Activated T-helper 2 cell treated with anti-CD3 and anti-CD28 coated beads, Interferon-gamma antibody, Interleukin-2, Interleukin-4, amounts not matched to agents 10 μg/mL and 5 μg/mL and 100 μg/mL, durations not matched to agents 14 hours and 24 hours and 36 hours (primary cell): ENCODE measurements at regions of chr1 and their contacts with region 1.

Region 1: GRCh38 chr1:214328770-214329469 is 48.0 kb downstream of the SMYD2 start:
- DNase-seq: peak; percentile 70
- H3K4me3 Mint-ChIP-seq: no peak overlapping the region
- H3K27ac Mint-ChIP-seq: no peak overlapping the region
- H3K4me1 Mint-ChIP-seq: peaks cover 14% of the 10 kb centered on the region
- H3K27me3 Mint-ChIP-seq: no peaks in the 10 kb centered on the region

Region 2: GRCh38 chr1:213987927-213988506 is 340.9 kb before region 1 on chr1 and contains the start of gene PROX1:
- intact Hi-C with region 1: loop called (anchors 5 kb)
- DNase-seq: peak; percentile 48
- H3K4me3 Mint-ChIP-seq: peak within 1 kb of the TSS; percentile 89
- H3K27ac Mint-ChIP-seq: peak within 1 kb of the TSS; percentile 44
- H3K4me1 Mint-ChIP-seq: peaks cover 25% of the 10 kb centered on the region
- H3K27me3 Mint-ChIP-seq: peaks cover 94% of the 10 kb centered on the region
- total RNA-seq, gene PROX1: not detected in 2 replicates

Region 3: GRCh38 chr1:214002472-214002871 is 326.4 kb before region 1 on chr1:
- intact Hi-C with region 1: no loop called
- DNase-seq: no peak
- H3K4me3 Mint-ChIP-seq: no peak overlapping the region
- H3K27ac Mint-ChIP-seq: no peak overlapping the region
- H3K4me1 Mint-ChIP-seq: no peaks in the 10 kb centered on the region
- H3K27me3 Mint-ChIP-seq: peaks cover 14% of the 10 kb centered on the region

Region 4: GRCh38 chr1:214213136-214213535 is 115.8 kb before region 1 on chr1:
- intact Hi-C with region 1: loop called (anchors 1 kb)
- DNase-seq: no peak
- H3K4me3 Mint-ChIP-seq: no peak overlapping the region
- H3K27ac Mint-ChIP-seq: no peak overlapping the region
- H3K4me1 Mint-ChIP-seq: peaks cover 3% of the 10 kb centered on the region
- H3K27me3 Mint-ChIP-seq: peaks cover 31% of the 10 kb centered on the region

Region 5: GRCh38 chr1:214261206-214262123 is 67.5 kb before region 1 on chr1:
- intact Hi-C with region 1: loop called (anchors 1 kb)
- DNase-seq: peak; percentile 71
- H3K4me3 Mint-ChIP-seq: no peak overlapping the region
- H3K27ac Mint-ChIP-seq: no peak overlapping the region
- H3K4me1 Mint-ChIP-seq: peaks cover 28% of the 10 kb centered on the region
- H3K27me3 Mint-ChIP-seq: peaks cover 68% of the 10 kb centered on the region

Region 6: DNA sequence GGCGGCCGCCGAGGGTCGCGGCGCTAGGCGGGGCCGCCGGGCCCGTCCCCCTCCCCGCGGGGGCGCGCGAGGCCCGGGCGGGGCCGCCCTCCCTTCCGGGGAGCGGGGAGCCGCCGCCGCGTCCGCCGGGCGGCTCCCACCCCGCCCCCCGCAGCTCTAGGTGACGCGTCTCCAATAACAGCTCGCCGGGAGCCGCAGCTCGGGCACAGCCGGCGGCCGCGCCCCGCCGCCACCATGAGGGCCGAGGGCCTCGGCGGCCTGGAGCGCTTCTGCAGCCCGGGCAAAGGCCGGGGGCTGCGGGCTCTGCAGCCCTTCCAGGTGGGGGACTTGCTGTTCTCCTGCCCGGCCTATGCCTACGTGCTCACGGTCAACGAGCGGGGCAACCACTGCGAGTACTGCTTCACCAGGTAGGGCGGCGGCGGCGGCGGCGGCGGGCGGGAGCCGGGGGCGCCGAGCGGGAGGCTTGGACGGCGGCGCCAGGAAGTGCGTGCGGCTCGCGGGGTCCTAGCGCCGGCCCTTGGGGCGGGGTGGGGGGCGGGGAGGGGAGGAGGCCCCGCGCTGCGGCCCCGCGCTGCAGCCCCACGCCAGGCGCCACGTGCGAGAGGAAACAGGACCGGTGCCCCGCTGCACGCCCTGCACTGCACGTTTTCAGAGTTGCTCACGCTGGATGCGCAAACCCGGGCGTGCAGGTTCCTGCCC is 47.8 kb before region 1 on chr1 and contains the start of gene SMYD2:
- intact Hi-C with region 1: loop called (anchors 5 kb)
- DNase-seq: peak; percentile 64
- H3K4me3 Mint-ChIP-seq: peak within 1 kb of the TSS; percentile 94
- H3K27ac Mint-ChIP-seq: peak within 1 kb of the TSS; percentile 75
- H3K4me1 Mint-ChIP-seq: peaks cover 32% of the 10 kb centered on the region
- H3K27me3 Mint-ChIP-seq: no peaks in the 10 kb centered on the region
- total RNA-seq, gene SMYD2: 33.6 and 34.5 TPM in 2 replicates

Region 7: GRCh38 chr1:214416417-214416816 is 87.5 kb after region 1 on chr1:
- intact Hi-C with region 1: no loop called
- DNase-seq: no peak
- H3K4me3 Mint-ChIP-seq: no peak overlapping the region
- H3K27ac Mint-ChIP-seq: no peak overlapping the region
- H3K4me1 Mint-ChIP-seq: peaks cover 77% of the 10 kb centered on the region
- H3K27me3 Mint-ChIP-seq: no peaks in the 10 kb centered on the region

Region 8: DNA sequence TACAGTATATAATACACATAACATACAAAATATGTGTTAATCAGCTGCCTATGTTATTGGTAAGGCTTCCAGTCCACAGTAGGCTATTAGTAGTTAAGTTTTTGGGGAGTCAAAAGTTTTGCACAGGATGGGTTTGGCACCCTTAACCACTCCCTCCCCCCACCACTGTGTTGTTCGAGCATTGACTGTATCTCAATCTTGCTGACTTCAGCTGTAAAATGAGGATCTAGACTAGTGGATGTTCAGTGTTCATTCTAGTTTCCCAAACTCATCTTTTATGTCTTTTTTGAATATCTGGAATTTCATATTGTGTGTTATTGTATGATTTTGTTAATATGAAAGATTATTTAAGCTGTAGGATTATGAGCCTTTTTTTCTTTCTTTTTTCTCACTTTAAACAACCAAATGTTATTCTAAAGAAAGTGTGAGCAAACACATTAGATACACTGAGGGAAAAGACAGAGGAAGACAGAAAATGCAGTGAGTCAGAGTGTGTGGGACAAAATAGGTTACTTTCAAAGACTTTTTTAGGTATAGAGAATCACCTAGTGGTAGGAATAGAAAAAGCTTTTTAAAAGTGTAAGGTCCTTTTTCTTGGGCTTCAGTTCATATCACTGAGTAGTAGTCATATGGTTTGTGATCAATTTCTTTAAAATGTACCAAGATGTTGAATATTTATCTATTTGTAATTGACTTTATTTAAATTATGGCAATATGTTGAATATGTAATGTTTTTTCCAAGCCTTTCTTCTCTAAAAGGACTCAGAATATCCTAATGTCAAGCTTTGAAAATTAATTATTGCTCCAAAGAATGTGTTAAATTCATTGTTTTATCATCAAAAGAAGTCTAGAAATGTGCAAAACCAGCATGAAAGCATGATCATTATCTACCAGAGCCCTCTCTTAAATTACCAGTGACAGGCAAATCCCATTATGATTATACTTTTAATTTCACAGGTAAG is 256.2 kb after region 1 on chr1:
- intact Hi-C with region 1: loop called (anchors 1 kb)
- DNase-seq: no peak
- H3K4me3 Mint-ChIP-seq: no peak overlapping the region
- H3K27ac Mint-ChIP-seq: peak overlapping the region; percentile 70
- H3K4me1 Mint-ChIP-seq: peaks cover 19% of the 10 kb centered on the region
- H3K27me3 Mint-ChIP-seq: no peaks in the 10 kb centered on the region

Region 9: GRCh38 chr1:214602764-214603657 is 274.1 kb after region 1 on chr1 and contains the start of gene CENPF:
- intact Hi-C with region 1: loop called (anchors 5 kb)
- DNase-seq: peak; percentile 95
- H3K4me3 Mint-ChIP-seq: peak within 1 kb of the TSS; percentile 98
- H3K27ac Mint-ChIP-seq: peak within 1 kb of the TSS; percentile 94
- H3K4me1 Mint-ChIP-seq: peaks cover 29% of the 10 kb centered on the region
- H3K27me3 Mint-ChIP-seq: no peaks in the 10 kb centered on the region
- total RNA-seq, gene CENPF: 77.1 and 85.9 TPM in 2 replicates